ENCODE measurements at regions of chr6 and their contacts with region 1.

Region 1: DNA sequence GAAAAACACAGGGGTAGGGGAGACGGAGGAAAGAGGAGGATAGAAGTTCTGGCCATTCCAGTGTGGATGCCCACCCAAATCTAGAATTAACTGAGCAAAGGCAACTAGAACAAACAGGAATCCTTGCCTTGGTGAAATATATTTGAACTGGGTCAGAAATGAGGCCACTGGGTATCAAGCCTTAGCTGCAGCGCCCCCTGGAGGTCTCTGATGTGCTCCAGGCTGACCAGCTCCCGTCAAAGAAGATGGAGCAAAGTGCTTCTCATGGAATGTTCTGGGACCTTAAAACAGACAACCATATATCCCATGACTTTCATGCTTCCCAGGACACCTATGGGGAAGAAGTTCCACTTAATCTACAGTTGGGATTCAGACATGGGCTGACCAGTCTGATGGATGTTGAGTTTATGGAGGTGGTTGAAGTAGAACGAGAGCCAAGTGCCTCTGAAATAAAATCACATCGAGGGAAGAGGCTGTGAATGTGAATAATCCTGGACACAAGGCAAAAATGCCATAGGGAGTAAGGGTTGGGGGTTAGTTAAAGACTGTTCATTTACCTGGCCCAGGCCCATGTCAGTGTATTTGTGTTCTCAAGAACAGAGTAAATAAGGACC is 50.4 kb downstream of the HLA-DPB1 start:
- DNase-seq: peak; percentile 35
- ATAC-seq: peak; percentile 65
- H3K4me3 ChIP-seq: no peak overlapping the region
- H3K27ac ChIP-seq: no peak overlapping the region
- H3K4me1 ChIP-seq: peaks cover 0 to 8% of the 10 kb centered on the region in 2 experiments; a peak in 1 of 4 replicates
- H3K27me3 ChIP-seq: no peaks in the 10 kb centered on the region
- CTCF ChIP-seq: peak; percentile 50 to 86 (median 85); a peak in 5 of 6 replicates
- POLR2A ChIP-seq: no peak
- RAD21 ChIP-seq: peak; percentile 36

Region 2: GRCh38 chr6:32637219-32637880 is 488.9 kb before region 1 on chr6 and contains the start of gene HLA-DQA1:
- CTCF ChIA-PET with region 1: no interaction called
- POLR2A ChIA-PET with region 1: no interaction called
- RAD21 ChIA-PET with region 1: no interaction called
- intact Hi-C with region 1: no loop called
- DNase-seq: no peak
- ATAC-seq: no peak
- H3K4me3 ChIP-seq: no peak within 1 kb of the TSS
- H3K27ac ChIP-seq: no peak within 1 kb of the TSS
- H3K4me1 ChIP-seq: no peaks in the 10 kb centered on the region
- H3K27me3 ChIP-seq: no peaks in the 10 kb centered on the region
- CTCF ChIP-seq: no peak
- POLR2A ChIP-seq: no peak
- RAD21 ChIP-seq: no peak
- total RNA-seq, gene HLA-DQA1: 0.86 TPM

Region 3: GRCh38 chr6:33136310-33136900 is 10.2 kb after region 1 on chr6:
- CTCF ChIA-PET with region 1: interaction called, 13 read pairs
- POLR2A ChIA-PET with region 1: interaction called, 3 read pairs
- RAD21 ChIA-PET with region 1: no interaction called
- intact Hi-C with region 1: no loop called
- DNase-seq: no peak
- ATAC-seq: no peak
- H3K4me3 ChIP-seq: no peak overlapping the region
- H3K27ac ChIP-seq: no peak overlapping the region
- H3K4me1 ChIP-seq: no peaks in the 10 kb centered on the region
- H3K27me3 ChIP-seq: no peaks in the 10 kb centered on the region
- CTCF ChIP-seq: no peak
- POLR2A ChIP-seq: no peak
- RAD21 ChIP-seq: no peak

Region 4: GRCh38 chr6:33147807-33148666 is 21.8 kb after region 1 on chr6:
- CTCF ChIA-PET with region 1: interaction called, 17 read pairs
- POLR2A ChIA-PET with region 1: no interaction called
- RAD21 ChIA-PET with region 1: no interaction called
- intact Hi-C with region 1: loop called (anchors 1 kb)
- DNase-seq: peak; percentile 54
- ATAC-seq: peak; percentile 75
- H3K4me3 ChIP-seq: no peak overlapping the region
- H3K27ac ChIP-seq: no peak overlapping the region
- H3K4me1 ChIP-seq: 0 out of 4 replicates have a peak, but pooled peaks cover 0 to 6% of the 10 kb centered on the region in 2 experiments
- H3K27me3 ChIP-seq: no peaks in the 10 kb centered on the region
- CTCF ChIP-seq: peak; percentile 78 to 85 (median 79)
- POLR2A ChIP-seq: no peak
- RAD21 ChIP-seq: peak; percentile 71

Region 5: GRCh38 chr6:33161354-33162331 is 35.4 kb after region 1 on chr6:
- CTCF ChIA-PET with region 1: interaction called, 10 read pairs
- POLR2A ChIA-PET with region 1: no interaction called
- RAD21 ChIA-PET with region 1: no interaction called
- intact Hi-C with region 1: no loop called
- DNase-seq: peak; percentile 18
- ATAC-seq: peak; percentile 89
- H3K4me3 ChIP-seq: peak overlapping the region; percentile 52 to 61
- H3K27ac ChIP-seq: peak overlapping the region; percentile 40
- H3K4me1 ChIP-seq: peaks cover 11 to 29% of the 10 kb centered on the region in 2 experiments
- H3K27me3 ChIP-seq: no peaks in the 10 kb centered on the region
- CTCF ChIP-seq: peak; percentile 72 to 91 (median 90); a peak in 5 of 6 replicates
- POLR2A ChIP-seq: peak; percentile 17
- RAD21 ChIP-seq: peak; percentile 68

Region 6: GRCh38 chr6:33200219-33201146 is 74.3 kb after region 1 on chr6 and contains the starts of genes RXRB and SLC39A7:
- CTCF ChIA-PET with region 1: no interaction called
- POLR2A ChIA-PET with region 1: no interaction called
- RAD21 ChIA-PET with region 1: no interaction called
- intact Hi-C with region 1: loop called (anchors 1 kb)
- DNase-seq: peak; percentile 98
- ATAC-seq: peak; percentile 61
- H3K4me3 ChIP-seq: peak within 1 kb of the TSS; percentile 63 to 69
- H3K27ac ChIP-seq: peak within 1 kb of the TSS; percentile 94
- H3K4me1 ChIP-seq: peaks cover 35 to 60% of the 10 kb centered on the region in 2 experiments
- H3K27me3 ChIP-seq: no peaks in the 10 kb centered on the region
- CTCF ChIP-seq: no peak
- POLR2A ChIP-seq: no peak
- RAD21 ChIP-seq: no peak
- total RNA-seq, gene RXRB: 49.9 TPM
- total RNA-seq, gene SLC39A7: 130 TPM

Region 7: GRCh38 chr6:33276864-33277662 is 150.9 kb after region 1 on chr6 and contains the start of gene B3GALT4:
- CTCF ChIA-PET with region 1: no interaction called
- POLR2A ChIA-PET with region 1: no interaction called
- RAD21 ChIA-PET with region 1: no interaction called
- intact Hi-C with region 1: no loop called
- DNase-seq: no peak
- ATAC-seq: peak; percentile 65
- H3K4me3 ChIP-seq: peak within 1 kb of the TSS; percentile 34 to 99
- H3K27ac ChIP-seq: peak within 1 kb of the TSS; percentile 82
- H3K4me1 ChIP-seq: peaks cover 43 to 68% of the 10 kb centered on the region in 2 experiments
- H3K27me3 ChIP-seq: no peaks in the 10 kb centered on the region
- CTCF ChIP-seq: peak in 2 of 3 experiments; percentile 46 to 63; a peak in 4 of 6 replicates
- POLR2A ChIP-seq: peak; percentile 81
- RAD21 ChIP-seq: no peak
- total RNA-seq, gene B3GALT4: 1.9 TPM